Heart left ventricle (tissue), 16 donors: ENCODE measurements at regions of chr2 and their contacts with region 1.

Region 1: DNA sequence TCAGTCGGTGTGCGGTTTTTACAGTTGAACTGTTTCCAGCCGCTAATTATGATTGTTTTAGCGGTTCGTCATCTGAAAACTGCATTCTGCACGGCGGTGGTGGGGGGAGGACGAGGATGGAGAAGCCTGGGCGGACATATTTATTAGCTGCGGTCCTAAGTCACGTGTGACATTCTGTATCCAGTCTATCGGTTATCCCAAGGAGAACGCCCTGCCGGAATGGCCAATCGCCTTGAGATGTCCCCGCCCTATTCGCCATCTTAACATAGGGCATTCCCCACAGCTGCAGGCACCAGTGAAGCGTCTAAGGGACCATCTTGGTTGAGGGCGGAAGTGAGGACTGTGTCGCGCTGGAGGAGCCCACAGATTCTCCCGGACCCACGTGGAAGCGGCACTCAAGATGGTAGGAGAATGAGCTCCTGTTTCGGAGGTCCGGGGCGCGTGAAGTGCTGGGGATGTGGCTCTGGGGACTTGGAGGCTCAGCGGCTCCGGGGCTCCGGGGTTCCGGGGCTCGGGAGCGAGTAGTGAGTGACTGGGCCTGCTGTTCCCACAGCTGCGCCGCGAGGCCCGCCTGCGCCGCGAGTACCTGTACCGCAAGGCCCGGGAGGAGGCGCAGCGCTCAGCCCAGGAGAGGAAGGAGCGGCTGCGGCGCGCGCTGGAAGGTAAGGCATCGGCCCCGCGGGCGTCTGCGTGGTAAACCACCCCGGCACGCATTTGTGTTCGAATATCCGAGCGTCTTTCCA is at the start of gene IMP4:
- DNase-seq: peak; percentile 95 to 99 (median 98)
- ATAC-seq: peak; percentile 96 to 99 (median 98)
- H3K4me3 ChIP-seq: peak within 1 kb of the TSS; percentile 42 to 94 (median 76)
- H3K27ac ChIP-seq: peak within 1 kb of the TSS; percentile 82 to 95 (median 94)
- H3K4me1 ChIP-seq: peaks cover 3 to 26% (median 17%) of the 10 kb centered on the region in 12 donors
- H3K27me3 ChIP-seq: no peaks in the 10 kb centered on the region
- CTCF ChIP-seq: peak in 9 of 12 donors; percentile 12 to 63 (median 39)
- POLR2A ChIP-seq: peak in 1 of 2 donors; percentile 13
- total RNA-seq, gene IMP4: 55.8 to 130 (median 68.5) TPM

Region 2: GRCh38 chr2:129877289-129877779 is 465.4 kb before region 1 on chr2:
- intact Hi-C with region 1: loop called in 2 of 10 experiments (anchors 5 to 10 kb)
- DNase-seq: peak; percentile 94 to 96 (median 95)
- ATAC-seq: peak; percentile 92 to 96 (median 96)
- H3K4me3 ChIP-seq: peak overlapping the region; percentile 38 to 82 (median 69)
- H3K27ac ChIP-seq: peak overlapping the region in 11 of 12 donors; percentile 38 to 86 (median 76)
- H3K4me1 ChIP-seq: peaks cover 0 to 19% (median 9%) of the 10 kb centered on the region in 12 donors
- H3K27me3 ChIP-seq: no peaks in the 10 kb centered on the region
- CTCF ChIP-seq: no peak
- POLR2A ChIP-seq: no peak

Region 3: DNA sequence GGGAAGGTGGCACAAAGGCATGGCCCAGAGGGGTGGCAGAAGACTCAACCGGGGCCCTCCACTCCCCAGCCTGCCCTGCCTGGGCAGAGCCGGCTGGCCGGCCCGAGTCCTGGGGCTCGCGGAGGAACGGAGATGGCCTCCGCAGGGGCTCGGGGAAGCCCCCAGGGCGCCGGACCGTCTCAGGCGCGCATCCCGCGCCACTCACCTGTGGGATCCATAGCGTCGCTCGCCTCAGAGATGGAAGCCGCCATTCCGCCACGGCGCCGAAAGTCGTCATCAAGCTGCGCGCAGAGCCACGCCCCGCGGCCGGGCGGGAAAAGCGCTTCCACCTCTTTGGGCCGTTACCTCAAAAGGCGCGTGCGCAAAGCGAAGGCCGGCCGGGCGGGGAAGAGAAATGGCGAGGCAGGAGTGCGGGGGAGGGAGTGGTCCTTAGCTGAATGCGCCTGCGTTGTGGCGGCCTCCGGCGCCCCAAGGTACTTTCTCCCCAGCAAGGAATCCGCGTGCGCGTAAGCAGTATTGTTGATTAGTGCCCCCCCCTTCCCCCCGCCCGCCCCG is 161.3 kb before region 1 on chr2 and contains the start of gene SMPD4:
- intact Hi-C with region 1: loop called in 3 of 10 experiments (anchors 5 to 10 kb)
- DNase-seq: peak; percentile 97 to 99 (median 98)
- ATAC-seq: peak; percentile 90 to 96 (median 93)
- H3K4me3 ChIP-seq: peak within 1 kb of the TSS; percentile 59 to 100 (median 88)
- H3K27ac ChIP-seq: peak within 1 kb of the TSS; percentile 54 to 98 (median 95)
- H3K4me1 ChIP-seq: peaks cover 6 to 31% (median 20%) of the 10 kb centered on the region in 12 donors
- H3K27me3 ChIP-seq: no peaks in the 10 kb centered on the region
- CTCF ChIP-seq: no peak
- POLR2A ChIP-seq: no peak
- total RNA-seq, gene SMPD4: 23.4 to 32.7 (median 29.2) TPM

Region 4: DNA sequence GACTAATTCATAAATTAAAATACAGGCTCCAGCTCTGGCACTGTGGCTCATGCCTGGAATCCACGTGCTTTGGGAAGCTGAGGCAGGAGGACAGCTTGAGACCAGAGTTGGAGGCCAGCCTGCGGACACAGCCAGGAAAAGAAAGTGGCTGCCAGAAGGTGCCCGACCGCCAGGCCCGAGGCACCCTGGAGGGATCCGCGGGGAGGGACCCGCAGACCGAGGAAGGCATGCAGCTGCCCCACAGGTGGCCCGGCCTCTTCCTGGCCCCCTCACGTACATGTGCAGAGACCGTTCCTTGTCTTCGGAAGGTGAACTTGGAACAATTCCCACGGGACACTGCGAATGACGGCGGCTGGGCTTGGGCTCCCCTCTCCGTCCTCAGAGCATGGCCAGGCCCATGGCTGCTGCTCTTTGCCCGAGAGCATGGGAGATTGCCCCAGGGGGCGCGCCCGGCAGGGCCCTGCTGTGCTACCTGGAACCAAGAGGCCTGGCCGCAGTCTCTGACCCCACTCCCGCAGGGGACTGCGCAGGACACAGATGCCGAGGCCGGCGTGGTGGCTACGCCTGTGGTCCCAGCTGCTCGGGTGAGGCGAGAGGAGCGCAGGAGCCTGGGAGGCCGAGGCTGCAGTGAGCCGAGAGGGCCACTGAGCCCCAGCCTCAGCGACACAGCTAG is 55.6 kb before region 1 on chr2:
- intact Hi-C with region 1: no loop called
- DNase-seq: no peak
- ATAC-seq: no peak
- H3K4me3 ChIP-seq: no peak overlapping the region
- H3K27ac ChIP-seq: no peak overlapping the region
- H3K4me1 ChIP-seq: no peaks in the 10 kb centered on the region
- H3K27me3 ChIP-seq: no peaks in the 10 kb centered on the region
- CTCF ChIP-seq: no peak
- POLR2A ChIP-seq: no peak

Region 5: DNA sequence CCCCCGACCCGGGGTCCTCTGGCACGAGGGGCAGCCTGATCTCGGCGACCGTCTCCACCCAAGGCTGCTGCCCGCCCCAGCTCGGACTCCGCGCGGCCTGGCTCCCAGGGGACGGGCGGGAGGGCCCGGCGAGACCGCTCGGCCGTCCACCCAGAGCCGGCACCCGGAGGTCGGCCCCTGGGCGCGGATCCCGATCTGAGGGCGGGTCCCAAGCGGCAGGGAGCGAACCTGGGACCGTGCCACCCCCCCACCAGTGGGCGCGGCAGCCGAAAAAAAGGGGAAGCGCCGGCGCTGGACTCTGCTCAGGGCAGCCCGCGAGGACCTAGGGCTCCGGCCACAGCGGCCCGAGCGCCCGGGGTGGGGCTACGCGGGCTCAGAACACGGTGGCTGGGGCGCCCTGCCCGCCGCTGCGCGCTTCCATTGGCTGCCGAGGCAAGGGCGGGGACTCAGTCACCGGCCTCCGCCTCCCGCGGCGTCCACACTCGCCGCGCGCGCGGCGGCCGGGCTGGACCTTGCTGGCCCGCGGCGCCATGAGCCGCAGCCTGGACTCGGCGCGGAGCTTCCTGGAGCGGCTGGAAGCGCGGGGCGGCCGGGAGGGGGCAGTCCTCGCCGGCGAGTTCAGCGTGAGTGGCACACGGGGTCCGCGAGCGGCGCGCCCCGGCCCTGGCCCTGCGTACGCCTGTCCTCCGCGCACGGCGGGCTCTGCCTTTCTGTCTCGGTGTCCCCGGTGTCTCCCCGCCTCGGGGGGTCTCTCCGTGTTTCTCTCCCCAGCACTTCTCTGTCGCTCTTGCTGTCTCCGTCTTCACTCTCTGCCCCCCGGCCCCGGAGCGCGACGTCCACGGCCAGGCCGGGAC is 13.1 kb after region 1 on chr2 and contains the start of gene PTPN18:
- intact Hi-C with region 1: loop called in 2 of 10 experiments (anchors 1 kb)
- DNase-seq: peak; percentile 91 to 97 (median 94)
- ATAC-seq: peak; percentile 95 to 98 (median 98)
- H3K4me3 ChIP-seq: peak within 1 kb of the TSS; percentile 57 to 91 (median 84)
- H3K27ac ChIP-seq: peak within 1 kb of the TSS; percentile 78 to 96 (median 86)
- H3K4me1 ChIP-seq: peaks cover 0 to 44% (median 22%) of the 10 kb centered on the region in 12 donors
- H3K27me3 ChIP-seq: no peaks in the 10 kb centered on the region
- CTCF ChIP-seq: peak; percentile 25 to 80 (median 65)
- POLR2A ChIP-seq: peak in 1 of 2 donors; percentile 93
- total RNA-seq, gene PTPN18: 9.7 to 42.5 (median 11.1) TPM

Region 6: DNA sequence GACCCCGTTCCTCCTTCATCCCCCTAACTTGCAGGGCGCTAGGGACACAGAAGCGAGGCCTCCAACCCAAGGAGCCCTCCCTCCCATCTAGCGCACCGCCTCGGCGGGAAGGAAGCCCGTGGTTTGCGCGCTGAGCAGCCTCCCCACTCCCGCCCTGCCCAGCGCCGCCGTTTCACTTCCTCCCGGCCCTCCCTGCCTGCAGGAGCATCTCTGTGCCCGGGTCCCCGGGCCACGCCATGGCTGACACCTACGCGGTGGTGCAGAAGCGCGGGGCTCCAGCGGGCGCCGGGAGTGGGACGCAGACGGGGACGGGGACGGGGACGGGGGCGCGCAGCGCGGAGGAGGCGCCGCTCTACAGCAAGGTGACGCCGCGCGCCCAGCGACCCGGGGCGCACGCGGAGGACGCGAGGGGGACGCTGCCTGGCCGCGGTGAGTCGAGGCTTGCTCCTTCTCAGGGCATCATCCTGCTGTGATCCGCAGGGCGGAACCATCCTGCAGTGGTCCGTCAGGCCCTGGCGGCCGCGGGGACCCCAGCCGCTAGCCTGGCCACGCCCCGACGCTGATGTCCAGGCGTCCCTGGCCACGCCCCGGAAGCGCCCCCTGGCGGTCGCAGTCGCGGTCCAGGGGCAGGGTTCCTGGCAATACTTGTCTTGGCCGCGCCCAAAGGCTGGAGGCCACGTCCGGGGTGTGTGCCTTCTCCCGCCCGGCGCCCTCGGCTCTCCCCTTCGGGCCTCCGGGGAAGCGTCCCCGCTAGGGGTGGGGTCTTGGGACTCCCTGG is 29.5 kb after region 1 on chr2:
- intact Hi-C with region 1: loop called in 1 of 10 experiments (anchors 2 kb)
- DNase-seq: peak; percentile 91 to 97 (median 94)
- ATAC-seq: peak; percentile 85 to 96 (median 95)
- H3K4me3 ChIP-seq: peak overlapping the region; percentile 57 to 95 (median 86)
- H3K27ac ChIP-seq: peak overlapping the region; percentile 84 to 96 (median 90)
- H3K4me1 ChIP-seq: peaks cover 0 to 74% (median 18%) of the 10 kb centered on the region in 12 donors
- H3K27me3 ChIP-seq: no peaks in the 10 kb centered on the region
- CTCF ChIP-seq: peak; percentile 77 to 97 (median 92)
- POLR2A ChIP-seq: peak in 1 of 2 donors; percentile 54

Region 7: GRCh38 chr2:130391058-130391871 is 48.6 kb after region 1 on chr2:
- intact Hi-C with region 1: loop called in 2 of 10 experiments (anchors 1 to 2 kb)
- DNase-seq: peak; percentile 82 to 91 (median 82)
- ATAC-seq: peak; percentile 67 to 92 (median 88)
- H3K4me3 ChIP-seq: peak overlapping the region; percentile 36 to 84 (median 74)
- H3K27ac ChIP-seq: peak overlapping the region; percentile 79 to 94 (median 89)
- H3K4me1 ChIP-seq: peaks cover 0 to 52% (median 34%) of the 10 kb centered on the region in 12 donors
- H3K27me3 ChIP-seq: no peaks in the 10 kb centered on the region
- CTCF ChIP-seq: peak in 3 of 12 donors; percentile 3 to 18 (median 8)
- POLR2A ChIP-seq: peak in 1 of 2 donors; percentile 32